Common myeloid progenitor, CD34-positive (primary cell): ENCODE measurements at regions of chr17 and their contacts with region 1.

Region 1: GRCh38 chr17:7834962-7835813 is 1.2 kb downstream of the KDM6B start:
- DNase-seq: peak; percentile 98 to 99 (median 99)
- H3K4me3 ChIP-seq: peak overlapping the region; percentile 67 to 92 (median 82)
- H3K27ac ChIP-seq: peak overlapping the region; percentile 98 to 99
- H3K4me1 ChIP-seq: peaks cover 12 to 62% (median 52%) of the 10 kb centered on the region in 4 experiments
- H3K27me3 ChIP-seq: no peaks in the 10 kb centered on the region

Region 2: DNA sequence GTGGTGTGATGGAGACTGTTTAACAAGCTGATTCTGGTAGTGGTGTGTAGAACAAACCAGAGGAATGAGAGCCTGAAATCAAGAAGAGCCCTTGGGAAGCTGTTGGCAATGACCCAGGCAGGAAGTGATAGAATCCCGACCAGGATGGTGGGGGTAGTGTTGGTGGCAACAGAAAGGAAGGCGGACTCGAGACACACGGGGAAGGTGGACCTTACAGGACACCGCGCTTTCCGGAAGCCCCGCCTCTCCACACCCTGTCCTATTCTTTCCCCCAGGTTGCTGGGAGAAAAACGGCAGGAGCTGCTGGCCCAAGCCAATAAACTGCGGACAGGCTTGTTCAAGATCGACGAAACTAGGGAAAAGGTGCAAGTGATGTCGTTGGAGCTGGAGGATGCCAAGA is 31.2 kb before region 1 on chr17:
- CTCF ChIA-PET with region 1: no interaction called
- POLR2A ChIA-PET with region 1: no interaction called
- DNase-seq: no peak
- H3K4me3 ChIP-seq: no peak overlapping the region
- H3K27ac ChIP-seq: no peak overlapping the region
- H3K4me1 ChIP-seq: peaks cover 0 to 4% (median 0%) of the 10 kb centered on the region in 4 experiments
- H3K27me3 ChIP-seq: no peaks in the 10 kb centered on the region

Region 3: GRCh38 chr17:7818746-7819645 is 16.2 kb before region 1 on chr17:
- CTCF ChIA-PET with region 1: interaction called, 34 read pairs
- POLR2A ChIA-PET with region 1: interaction called, 6 read pairs
- DNase-seq: no peak
- H3K4me3 ChIP-seq: no peak overlapping the region
- H3K27ac ChIP-seq: no peak overlapping the region
- H3K4me1 ChIP-seq: no peaks in the 10 kb centered on the region
- H3K27me3 ChIP-seq: no peaks in the 10 kb centered on the region

Region 4: GRCh38 chr17:7851438-7852256 is 16.5 kb after region 1 on chr17:
- CTCF ChIA-PET with region 1: interaction called, 29 read pairs
- POLR2A ChIA-PET with region 1: interaction called, 28 read pairs
- DNase-seq: peak; percentile 91 to 96 (median 95)
- H3K4me3 ChIP-seq: peak overlapping the region in 1 of 7 experiments; percentile 16
- H3K27ac ChIP-seq: no peak overlapping the region
- H3K4me1 ChIP-seq: peaks cover 0 to 32% (median 23%) of the 10 kb centered on the region in 4 experiments
- H3K27me3 ChIP-seq: no peaks in the 10 kb centered on the region

Region 5: DNA sequence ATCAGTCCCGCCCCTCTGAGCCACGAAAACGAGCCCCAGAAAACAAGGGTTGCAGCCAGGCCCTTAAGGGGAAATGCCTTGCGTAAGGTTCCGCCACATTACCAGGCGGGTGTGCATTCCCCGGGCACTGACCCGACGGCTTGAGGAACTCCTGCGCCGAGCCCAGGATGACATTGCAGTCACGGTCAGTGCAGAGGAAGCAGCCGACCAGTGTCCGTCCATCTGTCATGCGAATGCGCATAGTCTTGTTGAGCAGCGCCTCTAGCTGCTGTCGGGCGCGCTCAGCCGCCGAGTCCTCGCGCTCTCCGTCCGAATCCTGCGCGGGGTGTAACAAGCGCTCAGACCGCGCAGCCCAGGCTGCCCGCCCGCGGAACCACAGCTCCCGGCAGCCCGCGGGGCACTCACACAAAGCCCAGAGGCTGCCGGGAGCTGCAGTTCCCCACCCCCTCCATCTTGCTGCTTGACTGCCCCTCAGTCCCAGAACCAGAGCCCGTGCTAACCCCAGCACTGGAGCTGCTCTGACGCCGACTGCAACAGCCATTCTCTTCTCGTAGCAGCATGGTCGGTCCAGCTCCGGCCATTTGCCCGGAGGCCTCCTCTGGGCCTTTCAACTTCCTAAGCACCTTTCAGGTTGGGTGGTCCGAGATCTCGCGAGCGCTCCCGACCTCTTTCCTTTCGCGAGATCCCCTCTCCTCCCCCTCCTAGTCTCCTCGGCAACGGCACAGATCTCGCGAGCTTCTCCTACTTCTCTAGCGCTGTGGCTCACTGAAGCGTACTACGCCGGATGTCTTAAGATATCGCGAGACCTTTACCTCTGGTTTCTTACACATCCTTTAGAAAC is 21.9 kb after region 1 on chr17 and contains the start of gene NAA38:
- CTCF ChIA-PET with region 1: interaction called, 29 read pairs
- POLR2A ChIA-PET with region 1: interaction called, 28 read pairs
- DNase-seq: peak; percentile 99 to 100 (median 100)
- H3K4me3 ChIP-seq: peak within 1 kb of the TSS; percentile 56 to 93 (median 86)
- H3K27ac ChIP-seq: peak within 1 kb of the TSS; percentile 88 to 93
- H3K4me1 ChIP-seq: peaks cover 5 to 42% (median 38%) of the 10 kb centered on the region in 4 experiments
- H3K27me3 ChIP-seq: no peaks in the 10 kb centered on the region

Region 6: GRCh38 chr17:7862692-7863437 is 27.7 kb after region 1 on chr17:
- CTCF ChIA-PET with region 1: interaction called, 13 read pairs
- POLR2A ChIA-PET with region 1: interaction called, 16 read pairs
- DNase-seq: peak in 2 of 3 donors; percentile 66 to 78
- H3K4me3 ChIP-seq: no peak overlapping the region
- H3K27ac ChIP-seq: no peak overlapping the region
- H3K4me1 ChIP-seq: peaks cover 10 to 25% (median 20%) of the 10 kb centered on the region in 4 experiments
- H3K27me3 ChIP-seq: no peaks in the 10 kb centered on the region